ENCODE measurements at regions of chr12 and their contacts with region 1.

Region 1: DNA sequence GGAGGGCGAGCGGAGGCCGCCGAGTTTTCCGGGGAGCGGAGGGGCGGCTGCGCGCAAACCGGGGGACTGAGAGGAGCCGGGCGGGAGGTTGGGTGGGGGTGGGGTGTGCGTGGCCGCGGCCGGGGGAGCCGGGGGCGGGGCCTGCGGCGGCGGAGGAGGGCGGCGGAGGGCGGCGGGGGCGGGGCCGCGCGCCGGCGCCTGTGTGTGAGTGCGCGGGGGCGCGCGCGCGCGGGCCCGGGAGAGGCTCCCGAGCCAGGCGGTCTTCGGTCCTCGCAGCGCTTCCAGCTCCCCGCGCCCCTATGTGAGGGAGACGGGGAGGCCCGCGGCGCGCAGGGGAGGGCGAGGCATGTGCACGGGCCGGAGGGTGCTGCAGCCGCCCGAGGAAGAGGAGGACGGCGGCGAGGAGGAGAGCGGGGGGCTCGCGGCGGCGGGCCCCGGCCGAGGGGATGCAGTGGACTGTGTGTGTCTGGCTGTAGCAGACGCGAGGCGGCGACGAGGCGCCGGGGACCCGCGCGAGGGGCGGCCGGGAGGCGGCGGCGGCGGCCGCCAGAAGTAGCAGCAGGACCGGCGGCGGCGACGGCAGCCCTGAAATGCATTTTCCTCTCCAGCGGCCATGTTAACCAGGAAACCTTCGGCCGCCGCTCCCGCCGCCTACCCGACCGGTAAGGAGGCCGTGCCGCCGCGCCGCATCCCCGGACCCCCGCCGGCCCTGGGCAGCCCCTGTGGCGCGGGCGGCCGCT is at the start of gene DYRK2:
- DNase-seq: peak; percentile 32 to 88
- H3K4me3 ChIP-seq: peak within 1 kb of the TSS; percentile 99 to 100
- H3K27ac ChIP-seq: peak within 1 kb of the TSS; percentile 84 to 97
- H3K4me1 ChIP-seq: peaks cover 0 to 7% of the 10 kb centered on the region in 2 donors
- H3K27me3 ChIP-seq: no peaks in the 10 kb centered on the region
- CTCF ChIP-seq: peak in 1 of 3 experiments; percentile 5
- total RNA-seq, gene DYRK2: 40.1 TPM

Region 2: DNA sequence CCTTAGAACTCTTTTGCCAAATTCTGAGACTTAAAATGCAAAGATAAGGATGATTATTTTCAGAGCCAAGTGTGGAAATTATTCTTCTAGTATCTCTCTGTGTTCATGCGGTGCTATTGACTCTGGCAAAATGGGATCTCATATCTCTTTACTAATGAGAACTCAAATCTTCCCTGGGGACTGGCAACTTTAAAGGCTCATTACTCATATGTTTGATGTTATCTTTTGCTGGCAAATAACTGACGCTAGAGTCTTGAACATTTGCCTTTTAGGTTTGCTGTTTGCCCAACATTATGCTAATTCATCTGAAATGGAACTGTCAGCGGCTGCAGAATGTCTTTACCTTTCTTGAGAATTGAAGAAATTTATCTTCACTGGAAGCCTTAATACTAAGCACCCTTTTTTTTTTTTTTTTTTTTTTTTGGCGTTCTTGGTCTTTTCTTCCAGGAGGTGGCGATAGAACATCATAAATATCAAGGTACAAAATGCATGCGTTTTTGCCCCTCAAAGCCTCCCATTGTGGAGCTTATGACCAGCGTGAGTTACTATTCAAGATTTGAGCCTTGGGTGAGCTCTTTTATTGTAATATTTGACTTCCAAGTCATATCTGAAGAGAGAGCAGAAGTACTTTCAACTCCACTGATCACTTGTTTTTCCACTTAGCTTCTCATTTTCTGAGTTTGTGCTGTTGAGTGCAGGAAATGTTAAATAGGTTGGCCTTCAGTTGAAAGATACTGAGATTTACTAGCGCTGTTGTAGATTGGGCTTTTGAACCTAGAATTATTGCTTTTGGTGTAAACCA is 292.9 kb before region 1 on chr12:
- intact Hi-C with region 1: loop called (anchors 5 kb)
- DNase-seq: no peak
- H3K4me3 ChIP-seq: no peak overlapping the region
- H3K27ac ChIP-seq: peak overlapping the region in 1 of 2 donors; percentile 38
- H3K4me1 ChIP-seq: peaks cover 0 to 6% of the 10 kb centered on the region in 2 donors
- H3K27me3 ChIP-seq: no peaks in the 10 kb centered on the region
- CTCF ChIP-seq: peak; percentile 6 to 49 (median 38)

Region 3: DNA sequence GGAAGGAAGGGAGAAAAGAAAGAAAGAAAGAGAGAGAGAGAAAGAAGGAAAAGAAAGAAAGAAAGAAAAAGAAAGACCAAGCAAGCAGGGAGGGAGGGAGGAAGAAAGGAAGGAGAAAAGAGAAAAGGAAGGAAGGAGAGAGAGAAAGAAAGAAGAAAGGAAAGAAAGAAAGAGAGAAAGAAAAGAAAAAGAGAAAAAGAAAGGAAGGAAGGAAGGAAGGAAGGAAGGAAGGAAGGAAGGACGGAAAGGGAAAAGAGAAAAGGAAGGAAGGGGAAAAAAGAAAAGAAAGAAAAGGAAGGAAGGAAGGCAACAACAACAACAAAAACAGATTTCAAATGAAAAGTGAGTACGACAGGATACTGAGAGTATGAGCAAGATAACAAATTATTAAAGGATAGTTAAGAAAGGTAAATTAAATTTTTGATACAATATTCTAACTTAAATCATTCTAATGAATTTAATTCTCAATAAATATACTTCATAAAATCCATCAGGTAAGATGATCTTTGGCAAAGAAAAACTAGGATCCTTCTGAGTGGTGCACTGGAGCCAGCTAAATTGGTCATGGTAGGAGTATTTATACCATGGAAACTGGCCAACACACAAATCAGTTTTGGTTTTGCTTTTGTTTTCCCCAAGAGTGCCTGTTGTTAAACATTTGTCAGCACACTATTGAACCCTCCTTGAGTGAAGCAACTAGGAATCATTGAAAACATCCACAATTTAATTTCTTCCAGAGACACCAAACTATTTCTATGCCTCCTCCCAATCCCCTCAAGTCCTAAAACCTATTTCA is 56.3 kb before region 1 on chr12:
- intact Hi-C with region 1: no loop called
- DNase-seq: no peak
- H3K4me3 ChIP-seq: no peak overlapping the region
- H3K27ac ChIP-seq: no peak overlapping the region
- H3K4me1 ChIP-seq: no peaks in the 10 kb centered on the region
- H3K27me3 ChIP-seq: no peaks in the 10 kb centered on the region
- CTCF ChIP-seq: no peak

Region 4: DNA sequence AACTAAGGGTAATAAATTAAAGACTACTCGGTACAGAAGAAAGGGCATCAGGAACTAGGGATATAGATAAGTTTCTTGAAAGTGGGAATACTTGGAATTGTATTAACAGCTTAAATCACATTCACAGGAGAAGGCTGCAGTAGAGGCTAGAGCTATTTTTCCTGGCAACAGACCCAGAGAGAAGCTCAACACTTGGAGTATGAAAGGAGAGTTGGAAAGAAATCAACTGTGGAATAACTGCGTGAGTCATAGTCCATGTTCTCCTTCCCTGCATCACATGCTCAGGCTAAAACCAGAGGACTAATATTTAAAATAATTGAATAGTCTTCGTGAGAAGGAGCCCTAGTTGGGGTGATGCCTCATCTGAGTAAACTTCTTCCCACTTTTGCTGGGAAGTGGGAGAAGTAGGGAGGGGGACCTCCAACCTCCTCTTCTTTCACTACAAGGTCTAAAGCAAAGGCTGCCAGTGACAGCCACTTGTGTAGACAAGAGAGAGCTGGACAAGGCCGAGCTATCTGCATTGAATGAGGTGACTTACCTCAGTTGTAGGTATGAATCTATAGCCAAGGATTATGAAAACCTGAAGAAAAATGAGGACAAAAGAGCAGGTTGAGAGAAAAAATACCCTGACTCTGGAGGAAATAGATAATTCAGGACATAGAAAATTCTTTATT is 32.6 kb after region 1 on chr12:
- intact Hi-C with region 1: loop called (anchors 2 kb)
- DNase-seq: peak in 1 of 2 donors; percentile 69
- H3K4me3 ChIP-seq: no peak overlapping the region
- H3K27ac ChIP-seq: peak overlapping the region; percentile 72 to 90
- H3K4me1 ChIP-seq: peaks cover 0 to 23% of the 10 kb centered on the region in 2 donors
- H3K27me3 ChIP-seq: no peaks in the 10 kb centered on the region
- CTCF ChIP-seq: no peak

Region 5: DNA sequence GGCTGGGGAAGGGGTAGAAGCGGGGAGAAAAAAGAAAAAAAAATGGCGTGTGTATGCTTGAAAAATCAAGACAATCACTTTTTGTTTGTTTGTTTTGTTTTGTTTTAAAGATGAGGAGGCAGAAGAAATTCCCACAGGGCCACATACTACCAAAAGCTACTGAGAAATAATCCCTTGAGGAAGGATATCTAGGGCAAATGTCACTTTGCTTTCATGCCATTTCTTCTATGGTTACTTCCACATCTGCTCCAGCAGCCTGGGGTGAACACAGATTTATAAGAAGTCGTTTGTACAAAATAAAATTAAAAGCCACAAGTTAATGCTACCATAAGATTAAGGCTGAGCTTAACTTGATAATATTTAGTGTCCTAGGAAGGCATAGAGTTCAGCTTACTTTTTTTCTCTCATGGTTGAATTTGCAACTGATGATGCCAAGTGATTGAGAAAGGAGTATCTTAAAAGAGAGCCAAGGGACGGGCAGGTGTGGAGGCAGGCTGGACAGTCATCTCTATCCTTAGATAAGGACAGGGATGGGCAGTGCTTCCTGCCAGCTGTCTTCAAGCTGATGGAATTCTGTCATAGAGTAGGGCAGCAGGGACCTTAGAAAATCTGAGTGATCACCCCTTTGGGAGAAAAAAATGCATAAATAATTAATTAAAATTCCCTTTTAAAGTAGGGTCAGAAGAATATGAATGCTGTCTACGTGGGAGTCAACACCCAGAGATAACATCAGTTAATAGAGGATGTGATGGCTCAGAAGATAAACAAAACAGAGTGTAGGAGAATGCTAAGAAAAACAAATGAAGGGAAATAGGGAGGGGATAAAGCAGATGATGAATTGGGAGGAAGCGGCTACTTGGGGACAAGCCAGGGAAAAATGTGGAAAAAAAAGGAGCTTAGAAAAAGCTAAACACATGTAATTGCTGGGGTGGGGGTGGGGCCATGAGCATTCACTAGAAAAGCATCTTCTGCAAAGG is 57.0 kb after region 1 on chr12:
- intact Hi-C with region 1: no loop called
- DNase-seq: no peak
- H3K4me3 ChIP-seq: no peak overlapping the region
- H3K27ac ChIP-seq: no peak overlapping the region
- H3K4me1 ChIP-seq: no peaks in the 10 kb centered on the region
- H3K27me3 ChIP-seq: no peaks in the 10 kb centered on the region
- CTCF ChIP-seq: no peak

Region 6: DNA sequence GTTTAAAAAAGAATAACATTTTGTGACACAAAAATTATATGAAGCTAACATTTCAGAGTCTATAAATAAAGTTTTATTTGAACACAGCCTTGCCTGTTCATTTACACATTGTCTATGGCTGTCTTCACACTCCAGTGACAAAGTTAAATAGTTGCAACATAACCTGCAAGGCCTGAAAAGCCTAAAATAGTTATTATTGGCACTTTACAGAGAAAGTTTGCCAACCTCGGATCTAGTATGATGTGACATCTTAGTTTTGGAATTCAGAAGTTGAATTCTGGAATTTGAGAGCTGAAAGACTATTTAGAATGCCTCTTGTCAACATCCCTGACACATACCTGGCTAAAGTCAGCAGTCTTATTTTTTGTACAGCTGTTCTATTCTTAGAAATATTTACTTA is 68.1 kb after region 1 on chr12:
- intact Hi-C with region 1: loop called (anchors 2 kb)
- DNase-seq: no peak
- H3K4me3 ChIP-seq: no peak overlapping the region
- H3K27ac ChIP-seq: peak overlapping the region; percentile 31 to 63
- H3K4me1 ChIP-seq: peaks cover 0 to 22% of the 10 kb centered on the region in 2 donors
- H3K27me3 ChIP-seq: no peaks in the 10 kb centered on the region
- CTCF ChIP-seq: no peak

Region 7: DNA sequence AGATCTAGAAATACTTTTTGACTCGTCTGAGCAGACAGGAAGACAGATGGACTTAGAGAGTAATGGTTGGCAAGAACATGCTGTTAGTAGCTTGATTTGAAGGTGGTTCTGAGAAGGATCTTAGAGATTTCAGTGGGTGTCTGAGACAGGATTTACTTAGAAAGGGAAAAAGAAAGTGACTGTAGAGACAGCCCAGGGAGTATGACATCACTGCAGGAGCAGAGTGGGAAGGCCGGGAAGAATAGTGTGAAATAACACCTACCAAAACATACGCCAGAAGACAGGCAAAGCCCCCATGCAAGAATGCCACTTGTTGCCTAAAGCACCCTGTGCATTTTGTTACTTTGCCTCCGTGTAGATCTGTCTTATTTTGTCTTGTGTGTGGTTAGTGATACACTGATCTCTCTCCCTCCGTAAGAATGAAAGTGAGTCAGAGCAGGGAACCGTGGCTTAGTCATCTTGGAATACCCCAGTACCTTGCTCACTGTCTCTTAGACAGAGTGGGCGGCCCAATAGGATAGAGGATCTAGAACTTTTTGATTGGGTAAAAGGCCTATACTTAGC is 179.2 kb after region 1 on chr12:
- intact Hi-C with region 1: loop called (anchors 5 kb)
- DNase-seq: peak in 1 of 2 donors; percentile 78
- H3K4me3 ChIP-seq: peak overlapping the region; percentile 47 to 53
- H3K27ac ChIP-seq: peak overlapping the region; percentile 89 to 91
- H3K4me1 ChIP-seq: peaks cover 0 to 9% of the 10 kb centered on the region in 2 donors
- H3K27me3 ChIP-seq: no peaks in the 10 kb centered on the region
- CTCF ChIP-seq: no peak

Region 8: DNA sequence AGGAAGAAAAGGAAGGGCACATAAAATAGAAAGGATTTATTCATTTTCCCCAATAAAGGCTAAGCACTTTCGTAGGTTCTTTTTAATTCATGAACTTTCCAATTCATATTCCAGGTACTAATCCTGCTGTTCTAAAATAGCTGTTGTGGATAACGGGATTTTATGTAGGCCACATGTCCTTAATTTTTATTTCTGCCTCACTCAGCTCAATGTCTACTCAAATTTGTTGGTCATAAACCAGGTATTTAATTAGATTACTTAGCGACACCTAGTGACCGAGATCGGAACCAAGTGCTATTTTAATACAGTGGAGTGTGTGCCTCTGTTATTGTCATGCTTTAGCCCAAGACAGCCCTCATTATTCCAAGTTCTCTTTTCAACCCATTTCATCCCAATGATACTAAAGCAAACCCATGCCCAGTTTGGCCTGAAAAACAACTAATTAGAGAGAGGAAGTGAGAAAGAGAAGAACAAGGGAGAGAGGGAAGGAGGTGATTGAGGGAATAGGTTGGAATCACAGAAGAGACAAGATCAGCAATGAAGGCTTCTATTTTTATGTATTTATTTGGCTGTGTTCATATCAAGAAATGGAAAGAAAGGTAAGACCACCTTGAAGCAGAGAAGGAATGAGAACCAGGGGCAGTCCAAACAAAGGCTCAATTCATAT is 294.7 kb after region 1 on chr12:
- intact Hi-C with region 1: loop called (anchors 2 kb)
- DNase-seq: peak in 1 of 2 donors; percentile 87
- H3K4me3 ChIP-seq: no peak overlapping the region
- H3K27ac ChIP-seq: no peak overlapping the region
- H3K4me1 ChIP-seq: no peaks in the 10 kb centered on the region
- H3K27me3 ChIP-seq: no peaks in the 10 kb centered on the region
- CTCF ChIP-seq: peak; percentile 53 to 76 (median 54)

Measured in ascending aorta (tissue), 2 donors.